B cell (primary cell): ENCODE measurements at regions of chr22 and their contacts with region 1.

Region 1: DNA sequence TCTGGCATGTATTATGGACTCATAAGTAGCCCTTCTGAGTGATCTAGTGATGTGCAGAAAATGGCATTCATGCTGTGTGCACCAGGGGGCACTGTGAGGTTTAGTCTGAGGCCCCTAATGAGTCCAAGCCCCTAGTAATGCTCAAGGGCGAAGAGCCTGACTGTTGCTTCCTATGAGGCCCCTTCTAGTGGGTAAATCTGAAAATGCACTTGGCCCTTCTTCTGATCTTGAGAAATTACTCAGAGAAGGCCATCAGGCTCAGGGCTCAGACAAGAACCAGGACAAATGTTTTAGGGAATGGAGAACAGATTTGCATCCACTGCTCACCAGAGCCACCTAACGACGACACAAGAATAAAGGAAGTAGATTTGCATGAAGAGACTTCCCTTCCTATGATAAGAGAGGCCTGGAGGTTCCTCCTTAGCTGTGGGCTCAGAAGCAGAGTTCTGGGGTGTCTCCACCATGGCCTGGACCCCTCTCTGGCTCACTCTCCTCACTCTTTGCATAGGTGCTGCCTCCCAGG is 75.8 kb downstream of the GGTLC2 start:
- DNase-seq: peak; percentile 86
- ATAC-seq: peak; percentile 79
- H3K4me3 ChIP-seq: peak overlapping the region in 4 of 5 experiments; percentile 32 to 47 (median 38)
- H3K4me3 Mint-ChIP-seq: peak overlapping the region; percentile 60
- H3K27ac ChIP-seq: peak overlapping the region; percentile 92 to 96
- H3K27ac Mint-ChIP-seq: peak overlapping the region; percentile 95
- H3K4me1 ChIP-seq: peaks cover 43% of the 10 kb centered on the region in 2 donors
- H3K4me1 Mint-ChIP-seq: peaks cover 52% of the 10 kb centered on the region
- H3K27me3 ChIP-seq: no peaks in the 10 kb centered on the region
- H3K27me3 Mint-ChIP-seq: no peaks in the 10 kb centered on the region
- CTCF ChIP-seq: peak; percentile 78

Region 2: DNA sequence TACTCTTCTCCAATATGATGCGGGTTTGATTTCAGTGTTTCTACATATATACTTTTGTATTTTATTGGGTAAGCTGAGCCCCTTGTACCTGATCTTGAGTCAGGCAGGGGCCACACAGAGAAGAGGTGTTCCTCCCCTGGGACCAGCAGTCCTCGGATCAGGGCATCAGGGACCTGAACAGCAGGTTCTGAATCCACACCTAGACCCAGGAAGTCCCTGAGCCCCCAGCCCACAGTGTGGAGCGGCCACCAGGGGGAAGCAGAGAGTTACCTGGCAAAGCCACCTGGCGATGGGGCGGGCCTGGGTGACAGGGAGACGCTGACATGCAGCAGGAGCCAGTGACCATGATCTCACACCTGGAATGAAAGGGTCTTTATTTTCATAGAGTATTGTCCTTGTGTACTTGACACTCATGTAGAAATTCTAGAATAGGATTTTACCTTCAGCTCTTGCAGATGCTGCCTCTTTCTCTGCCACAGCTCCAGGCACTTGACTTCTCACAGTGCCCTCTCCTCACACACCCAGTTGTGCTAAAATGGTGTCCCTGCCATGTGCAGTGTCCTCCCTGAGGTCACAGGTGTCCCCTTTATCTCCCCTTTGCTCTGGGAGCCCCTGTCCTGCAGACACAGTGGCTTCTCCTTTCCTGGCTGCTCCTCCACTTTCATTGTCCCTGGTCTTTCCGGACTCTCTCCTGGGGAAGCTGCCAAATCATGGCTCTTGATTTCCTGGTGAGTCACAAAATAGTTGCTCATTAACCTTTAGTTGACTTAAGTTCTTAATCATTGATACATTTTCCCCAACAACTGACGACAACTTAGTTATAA is 27.3 kb before region 1 on chr22:
- CTCF ChIA-PET with region 1: interaction called, 15 read pairs
- POLR2A ChIA-PET with region 1: no interaction called
- intact Hi-C with region 1: no loop called
- DNase-seq: peak; percentile 83
- ATAC-seq: peak; percentile 81
- H3K4me3 ChIP-seq: no peak overlapping the region
- H3K4me3 Mint-ChIP-seq: peak overlapping the region; percentile 71
- H3K27ac ChIP-seq: peak overlapping the region in 1 of 2 donors; percentile 26
- H3K27ac Mint-ChIP-seq: peak overlapping the region; percentile 85
- H3K4me1 ChIP-seq: peaks cover 28 to 44% of the 10 kb centered on the region in 2 donors
- H3K4me1 Mint-ChIP-seq: peaks cover 34% of the 10 kb centered on the region
- H3K27me3 ChIP-seq: no peaks in the 10 kb centered on the region
- H3K27me3 Mint-ChIP-seq: no peaks in the 10 kb centered on the region
- CTCF ChIP-seq: peak; percentile 87